ENCODE measurements at regions of chr1 and their contacts with region 1.

Region 1: DNA sequence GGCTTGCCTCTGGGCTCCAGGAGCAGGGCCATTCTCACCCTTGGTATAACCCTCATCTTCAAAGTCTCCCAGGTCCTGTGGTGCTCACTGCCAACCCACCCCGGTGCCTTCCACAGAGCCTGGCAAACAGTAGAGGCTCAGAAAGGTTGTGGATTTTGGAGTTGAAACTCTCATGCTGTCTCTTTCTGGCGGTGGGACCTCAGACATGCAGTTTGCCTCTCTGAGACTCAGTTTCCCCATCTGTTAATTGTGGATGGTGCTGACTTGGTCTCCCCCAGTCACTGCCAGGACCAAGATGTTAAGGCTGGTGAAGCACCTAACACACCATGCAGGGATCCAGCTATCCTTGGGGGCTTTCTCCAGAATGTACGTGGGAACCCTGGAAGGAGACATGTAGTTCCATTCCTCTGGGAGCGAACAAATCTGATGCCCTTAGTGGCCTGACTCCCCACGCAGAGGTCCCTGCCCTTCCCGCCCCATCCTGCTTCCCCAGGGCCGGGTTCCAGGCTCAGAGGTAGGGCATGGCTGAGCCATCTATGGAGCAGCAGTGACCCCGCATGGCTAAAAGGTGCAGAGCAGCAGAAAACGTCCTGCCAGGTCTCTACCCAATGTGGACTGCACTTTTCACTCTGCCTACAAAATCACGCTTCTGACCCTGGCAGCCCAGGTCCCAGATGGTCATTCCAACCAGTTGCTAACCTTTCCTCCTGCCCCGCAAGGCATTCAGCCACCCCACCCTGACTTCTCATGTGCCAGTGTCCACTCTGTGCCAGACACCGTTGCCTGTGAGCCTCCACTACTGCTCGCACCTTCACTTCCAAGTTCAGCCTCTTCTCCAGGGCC is 9.2 kb upstream of the TTC22 start:
- DNase-seq: peak; percentile 11 to 69 (median 53)
- ATAC-seq: peak; percentile 69
- H3K4me3 ChIP-seq: no peak overlapping the region
- H3K4me3 Mint-ChIP-seq: no peak overlapping the region
- H3K27ac ChIP-seq: no peak overlapping the region
- H3K27ac Mint-ChIP-seq: peak overlapping the region in 1 of 9 donors; percentile 55
- H3K4me1 ChIP-seq: peaks cover 0 to 11% of the 10 kb centered on the region in 2 donors
- H3K4me1 Mint-ChIP-seq: peaks cover 0 to 29% (median 7%) of the 10 kb centered on the region in 7 donors
- H3K27me3 ChIP-seq: no peaks in the 10 kb centered on the region
- H3K27me3 Mint-ChIP-seq: no peaks in the 10 kb centered on the region

Region 2: GRCh38 chr1:53860967-53861411 is 949.3 kb before region 1 on chr1:
- CTCF ChIA-PET with region 1: interaction called, 3 read pairs
- POLR2A ChIA-PET with region 1: no interaction called
- intact Hi-C with region 1: loop called (anchors 1 to 10 kb)
- DNase-seq: peak in 7 of 9 donors; percentile 43 to 63 (median 53)
- ATAC-seq: peak; percentile 86
- H3K4me3 ChIP-seq: no peak overlapping the region
- H3K4me3 Mint-ChIP-seq: no peak overlapping the region
- H3K27ac ChIP-seq: no peak overlapping the region
- H3K27ac Mint-ChIP-seq: peak overlapping the region in 3 of 9 donors; percentile 29 to 68 (median 34)
- H3K4me1 ChIP-seq: no peaks in the 10 kb centered on the region
- H3K4me1 Mint-ChIP-seq: peaks cover 0 to 9% (median 8%) of the 10 kb centered on the region in 7 donors
- H3K27me3 ChIP-seq: no peaks in the 10 kb centered on the region
- H3K27me3 Mint-ChIP-seq: no peaks in the 10 kb centered on the region

Region 3: DNA sequence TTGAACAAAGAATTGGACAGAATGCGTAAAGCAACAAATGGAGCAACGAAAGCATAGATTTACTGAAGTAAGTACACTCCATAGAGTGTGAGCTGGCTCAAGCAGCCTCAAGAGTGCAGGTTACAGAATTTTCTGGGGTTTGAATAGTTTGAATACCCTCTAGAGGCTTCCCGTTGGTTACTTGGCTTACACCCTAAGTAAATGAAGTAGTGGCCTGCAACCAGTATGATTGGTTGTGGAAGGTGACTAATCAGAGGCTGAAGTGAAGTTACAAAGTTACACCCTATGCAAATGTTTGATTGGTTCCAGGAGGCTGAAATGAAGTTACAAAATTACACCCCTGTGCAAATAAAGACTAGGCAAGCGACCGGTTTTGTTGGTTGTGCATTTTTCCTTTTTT is 746.0 kb before region 1 on chr1:
- CTCF ChIA-PET with region 1: interaction called, 10 read pairs
- POLR2A ChIA-PET with region 1: no interaction called
- intact Hi-C with region 1: no loop called
- DNase-seq: no peak
- ATAC-seq: no peak
- H3K4me3 ChIP-seq: no peak overlapping the region
- H3K4me3 Mint-ChIP-seq: no peak overlapping the region
- H3K27ac ChIP-seq: no peak overlapping the region
- H3K27ac Mint-ChIP-seq: no peak overlapping the region
- H3K4me1 ChIP-seq: no peaks in the 10 kb centered on the region
- H3K4me1 Mint-ChIP-seq: peaks cover 5 to 20% (median 13%) of the 10 kb centered on the region in 7 donors
- H3K27me3 ChIP-seq: no peaks in the 10 kb centered on the region
- H3K27me3 Mint-ChIP-seq: no peaks in the 10 kb centered on the region

Region 4: GRCh38 chr1:54121482-54122134 is 688.7 kb before region 1 on chr1:
- CTCF ChIA-PET with region 1: no interaction called
- POLR2A ChIA-PET with region 1: no interaction called
- intact Hi-C with region 1: loop called in 1 of 2 experiments (anchors 1 kb)
- DNase-seq: peak; percentile 42 to 75 (median 60)
- ATAC-seq: peak; percentile 81
- H3K4me3 ChIP-seq: no peak overlapping the region
- H3K4me3 Mint-ChIP-seq: peak overlapping the region in 8 of 10 donors; percentile 39 to 74 (median 68)
- H3K27ac ChIP-seq: no peak overlapping the region
- H3K27ac Mint-ChIP-seq: peak overlapping the region in 2 of 9 donors; percentile 14 to 67
- H3K4me1 ChIP-seq: no peaks in the 10 kb centered on the region
- H3K4me1 Mint-ChIP-seq: peaks cover 0 to 13% (median 6%) of the 10 kb centered on the region in 7 donors
- H3K27me3 ChIP-seq: no peaks in the 10 kb centered on the region
- H3K27me3 Mint-ChIP-seq: peaks cover 0 to 7% (median 0%) of the 10 kb centered on the region in 5 donors

Region 5: DNA sequence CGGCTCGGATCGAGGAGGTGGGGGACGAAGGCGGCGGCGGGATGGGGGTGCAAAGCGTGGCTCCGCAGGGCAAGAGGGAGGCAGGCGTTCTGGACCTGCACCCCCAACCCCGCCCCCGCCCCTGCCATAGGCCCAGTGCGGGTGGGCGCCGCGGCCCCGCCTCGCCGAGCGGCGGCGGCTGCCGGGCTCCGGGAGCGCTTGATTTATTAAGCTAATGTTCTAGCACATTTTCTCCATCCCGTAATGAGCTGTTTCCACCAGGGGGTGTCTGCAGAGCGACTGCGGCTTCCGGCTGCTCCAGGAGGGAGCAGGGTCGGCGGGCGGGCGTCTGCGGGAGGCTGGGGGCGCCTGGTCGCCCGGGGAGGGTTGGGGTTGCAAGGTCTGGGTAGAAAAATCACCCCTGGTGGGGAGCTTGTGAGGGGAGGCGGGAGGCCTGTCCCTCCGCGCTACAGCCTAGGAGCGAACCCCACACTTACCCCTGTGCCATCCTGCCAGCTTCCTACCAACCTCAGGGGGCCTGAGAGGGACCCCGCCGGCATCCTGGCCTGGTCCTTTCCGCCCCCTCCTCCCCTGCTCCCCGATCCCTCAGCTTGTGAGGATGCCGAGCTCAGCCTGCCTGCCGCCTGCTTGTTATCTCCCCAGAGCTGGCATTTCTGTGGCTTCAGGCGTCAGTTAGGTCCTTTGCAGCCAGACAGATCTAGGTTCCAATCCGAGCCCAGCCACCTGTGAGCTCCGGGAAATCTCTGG is 310.8 kb before region 1 on chr1:
- CTCF ChIA-PET with region 1: interaction called, 6 read pairs
- POLR2A ChIA-PET with region 1: no interaction called
- intact Hi-C with region 1: loop called (anchors 1 kb)
- DNase-seq: peak in 6 of 9 donors; percentile 44 to 58 (median 50)
- ATAC-seq: peak; percentile 75
- H3K4me3 ChIP-seq: peak overlapping the region; percentile 48
- H3K4me3 Mint-ChIP-seq: peak overlapping the region; percentile 72 to 85 (median 78)
- H3K27ac ChIP-seq: no peak overlapping the region
- H3K27ac Mint-ChIP-seq: no peak overlapping the region
- H3K4me1 ChIP-seq: peaks cover 0 to 9% of the 10 kb centered on the region in 2 donors
- H3K4me1 Mint-ChIP-seq: peaks cover 4 to 11% (median 8%) of the 10 kb centered on the region in 7 donors
- H3K27me3 ChIP-seq: peaks cover 0 to 7% of the 10 kb centered on the region in 2 donors
- H3K27me3 Mint-ChIP-seq: peaks cover 27 to 67% (median 34%) of the 10 kb centered on the region in 5 donors

Region 6: GRCh38 chr1:54671985-54672608 is 138.2 kb before region 1 on chr1:
- CTCF ChIA-PET with region 1: interaction called, 5 read pairs
- POLR2A ChIA-PET with region 1: no interaction called
- intact Hi-C with region 1: loop called in 1 of 2 experiments (anchors 1 kb)
- DNase-seq: peak; percentile 18 to 69 (median 53)
- ATAC-seq: peak; percentile 86
- H3K4me3 ChIP-seq: no peak overlapping the region
- H3K4me3 Mint-ChIP-seq: no peak overlapping the region
- H3K27ac ChIP-seq: no peak overlapping the region
- H3K27ac Mint-ChIP-seq: no peak overlapping the region
- H3K4me1 ChIP-seq: no peaks in the 10 kb centered on the region
- H3K4me1 Mint-ChIP-seq: peaks cover 0 to 6% (median 0%) of the 10 kb centered on the region in 7 donors
- H3K27me3 ChIP-seq: no peaks in the 10 kb centered on the region
- H3K27me3 Mint-ChIP-seq: peaks cover 0 to 10% (median 0%) of the 10 kb centered on the region in 5 donors

Region 7: DNA sequence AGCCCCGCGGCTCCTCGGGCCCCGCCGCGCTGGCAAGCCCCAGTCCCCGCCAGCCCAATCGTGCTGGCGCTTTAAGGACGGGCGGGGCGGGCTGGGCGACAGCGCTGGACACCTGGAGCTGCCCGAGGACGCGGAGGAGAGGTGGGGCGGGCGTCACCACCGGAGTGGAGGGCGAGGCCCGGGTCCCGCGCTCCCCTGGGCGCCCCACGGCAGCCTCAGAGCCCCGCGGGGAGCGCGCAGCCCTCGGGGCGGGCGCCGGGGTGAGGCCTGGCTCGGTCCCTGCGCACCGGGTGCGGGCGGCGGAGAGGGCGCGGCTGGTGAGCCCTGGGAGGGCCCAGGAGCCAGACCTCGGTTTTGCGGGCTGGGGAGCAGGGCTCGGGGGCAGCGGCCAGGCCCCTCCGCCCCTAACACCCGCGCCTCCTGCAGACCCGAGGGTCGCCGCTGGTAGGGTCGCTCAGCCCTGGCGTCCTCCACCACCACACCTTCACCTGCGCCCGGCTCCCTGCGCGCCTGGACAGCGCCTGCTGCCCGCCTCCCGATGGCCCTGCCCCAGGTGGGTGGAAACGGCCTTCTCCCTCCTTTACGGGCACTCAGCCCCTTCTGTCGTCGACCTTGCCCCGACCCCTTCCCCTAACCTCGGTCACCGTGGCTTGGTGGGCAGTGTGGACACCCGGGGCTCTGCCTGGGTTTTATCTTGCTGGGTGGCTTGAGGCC is 170.4 kb after region 1 on chr1 and contains the start of gene TMEM61:
- CTCF ChIA-PET with region 1: no interaction called
- POLR2A ChIA-PET with region 1: no interaction called
- intact Hi-C with region 1: no loop called
- DNase-seq: no peak
- ATAC-seq: no peak
- H3K4me3 ChIP-seq: no peak within 1 kb of the TSS
- H3K4me3 Mint-ChIP-seq: peak within 1 kb of the TSS in 1 of 10 donors; percentile 27
- H3K27ac ChIP-seq: no peak within 1 kb of the TSS
- H3K27ac Mint-ChIP-seq: peak within 1 kb of the TSS in 1 of 9 donors; percentile 30
- H3K4me1 ChIP-seq: no peaks in the 10 kb centered on the region
- H3K4me1 Mint-ChIP-seq: peaks cover 0 to 7% (median 0%) of the 10 kb centered on the region in 7 donors
- H3K27me3 ChIP-seq: peaks cover 0 to 5% of the 10 kb centered on the region in 2 donors
- H3K27me3 Mint-ChIP-seq: peaks cover 26 to 56% (median 41%) of the 10 kb centered on the region in 5 donors
- total RNA-seq, gene TMEM61: not detected